ENCODE measurements at regions of chr4 and their contacts with region 1.

Region 1: GRCh38 chr4:121736735-121737351 is 28.1 kb downstream of the SMIM43 start:
- DNase-seq: peak; percentile 58
- H3K4me3 Mint-ChIP-seq: no peak overlapping the region
- H3K27ac Mint-ChIP-seq: no peak overlapping the region
- H3K4me1 Mint-ChIP-seq: peaks cover 9% of the 10 kb centered on the region
- H3K27me3 Mint-ChIP-seq: no peaks in the 10 kb centered on the region
- CTCF ChIP-seq: peak; percentile 42

Region 2: DNA sequence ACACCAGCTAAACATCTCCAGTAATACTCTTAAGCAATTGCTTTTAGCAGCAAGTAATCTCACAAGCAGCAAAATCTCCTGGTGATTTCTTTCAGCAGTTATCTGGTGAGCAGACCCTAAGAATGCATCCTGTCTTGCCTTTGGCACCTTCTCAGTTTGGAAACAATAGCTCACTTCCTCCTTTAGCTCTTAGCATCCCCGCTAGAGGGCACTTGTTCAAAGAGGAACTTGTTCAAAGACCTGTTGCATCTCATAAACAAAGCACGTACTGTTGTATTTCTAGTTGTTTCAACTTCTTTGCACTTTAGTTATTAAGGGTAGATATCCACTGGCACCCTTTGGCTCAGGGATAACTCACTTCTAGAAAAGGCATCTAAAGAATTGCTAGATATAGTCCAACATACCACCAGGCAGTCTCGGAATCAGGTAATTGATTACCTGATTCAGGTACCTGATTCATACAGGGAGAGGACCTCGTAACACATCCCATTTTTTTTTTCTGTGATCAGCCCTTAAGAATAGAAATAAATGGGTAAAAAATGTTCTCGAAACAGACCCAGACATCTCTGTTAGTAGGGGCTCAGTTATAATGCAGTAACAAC is 274.1 kb before region 1 on chr4:
- CTCF ChIA-PET with region 1: interaction called, 8 read pairs
- intact Hi-C with region 1: loop called (anchors 2 kb)
- DNase-seq: peak; percentile 58
- H3K4me3 Mint-ChIP-seq: no peak overlapping the region
- H3K27ac Mint-ChIP-seq: no peak overlapping the region
- H3K4me1 Mint-ChIP-seq: no peaks in the 10 kb centered on the region
- H3K27me3 Mint-ChIP-seq: no peaks in the 10 kb centered on the region
- CTCF ChIP-seq: peak; percentile 27